ENCODE measurements at regions of chr6 and their contacts with region 1.

Region 1: GRCh38 chr6:52162940-52163908 is 23.0 kb upstream of the IL17A start:
- DNase-seq: peak; percentile 29
- CTCF ChIP-seq: peak; percentile 76

Region 2: DNA sequence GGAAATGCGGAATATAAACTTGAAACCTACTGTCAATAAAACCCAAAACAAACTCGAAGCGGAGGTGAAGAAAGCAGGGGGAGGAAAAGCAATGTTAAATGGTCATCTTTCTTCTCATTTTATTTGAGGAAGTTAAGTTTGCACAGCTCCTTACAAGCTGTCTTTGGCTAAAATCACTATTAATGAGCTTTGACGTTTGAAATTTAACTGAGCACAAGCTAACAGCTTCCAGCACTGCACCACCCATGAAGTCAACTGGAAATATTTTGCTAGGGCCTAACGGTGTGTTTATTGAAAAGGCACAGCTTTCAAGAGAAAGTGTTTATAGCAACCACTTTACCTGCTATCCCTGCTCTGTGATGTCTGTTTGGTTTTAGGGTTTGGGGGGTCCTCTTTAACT is 179.7 kb before region 1 on chr6:
- in situ Hi-C with region 1: no loop called
- DNase-seq: no peak
- CTCF ChIP-seq: no peak

Region 3: DNA sequence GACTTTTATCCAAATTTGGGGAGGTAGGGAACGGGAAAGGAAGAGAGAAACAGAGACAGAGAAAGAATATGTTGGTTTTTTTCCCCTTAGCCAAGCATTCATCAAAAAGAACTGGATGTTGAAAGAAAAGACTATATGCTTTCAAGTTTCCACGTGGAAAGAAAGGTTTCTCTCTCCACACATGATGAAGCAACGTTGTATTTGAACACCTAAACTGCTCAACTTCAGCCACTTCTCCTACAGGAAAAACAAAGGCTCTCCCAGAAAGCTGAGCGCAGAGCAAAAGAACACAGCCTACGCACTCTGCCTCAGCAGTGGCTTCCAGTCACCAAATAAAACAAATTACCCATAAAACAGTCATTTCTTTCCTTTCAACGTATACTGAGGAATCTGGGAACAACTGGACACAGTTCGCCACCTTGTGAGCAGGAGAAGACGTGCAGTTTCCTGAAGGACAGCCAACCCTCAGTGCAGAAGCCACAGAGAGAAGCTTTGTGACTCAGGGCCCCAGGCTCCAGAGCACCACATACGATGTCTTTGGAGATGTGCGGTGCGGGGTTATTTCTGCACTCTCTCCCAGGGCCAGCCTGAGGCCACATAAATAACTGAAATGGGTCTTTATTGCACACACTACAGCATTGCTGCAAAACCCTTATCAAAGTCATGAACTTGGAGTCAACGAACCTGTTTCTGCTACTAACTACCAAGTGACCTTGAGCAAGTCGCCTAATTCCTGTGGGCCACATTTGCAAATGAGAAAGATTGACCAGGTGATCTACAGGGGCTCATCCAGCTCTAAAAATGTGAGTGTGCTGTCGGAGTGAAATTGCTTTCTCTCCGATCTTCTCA is 71.0 kb after region 1 on chr6:
- in situ Hi-C with region 1: loop called (anchors 10 kb)
- DNase-seq: peak; percentile 49
- CTCF ChIP-seq: peak; percentile 55

Region 4: GRCh38 chr6:52263709-52264540 is 100.7 kb after region 1 on chr6:
- in situ Hi-C with region 1: loop called (anchors 10 kb)
- DNase-seq: peak; percentile 62
- CTCF ChIP-seq: peak; percentile 91

Region 5: DNA sequence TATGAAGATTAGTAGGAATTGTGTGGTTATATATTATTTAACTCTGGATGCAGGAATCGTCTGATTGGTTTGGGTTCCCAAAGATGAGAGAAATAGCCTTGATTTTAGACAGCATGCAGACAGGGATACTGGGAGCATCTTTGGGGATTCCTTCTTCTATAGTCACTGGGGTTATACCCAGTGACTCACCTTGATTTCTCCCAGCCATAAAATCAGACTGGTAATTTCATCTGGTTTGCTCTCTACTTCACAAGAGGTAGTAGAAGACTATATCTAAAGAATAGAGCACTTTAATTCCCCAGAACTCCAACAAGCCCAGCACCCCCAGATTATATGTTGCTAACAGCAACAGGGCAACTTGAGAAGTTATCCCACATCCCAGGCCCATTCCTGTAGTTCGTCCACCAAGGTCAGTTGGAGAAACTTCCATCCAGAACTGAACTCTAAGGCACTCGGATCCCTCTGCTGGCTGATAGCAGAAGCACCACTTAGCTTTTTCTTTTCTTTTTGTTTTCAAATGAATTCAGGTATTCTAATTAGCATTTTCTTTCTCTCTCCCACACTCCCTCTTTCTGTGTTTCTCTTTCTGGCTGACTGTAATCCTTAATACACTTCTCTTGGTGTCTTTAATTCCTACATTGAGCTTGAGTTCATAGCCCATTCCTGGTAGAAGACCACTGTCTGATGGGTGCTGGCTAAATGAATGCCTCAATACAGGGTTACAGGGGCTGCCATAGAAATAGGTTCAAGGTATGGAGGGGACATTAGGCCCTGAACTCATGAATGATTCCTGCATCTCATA is 236.5 kb after region 1 on chr6:
- in situ Hi-C with region 1: loop called (anchors 10 kb)
- DNase-seq: peak; percentile 48
- CTCF ChIP-seq: peak; percentile 78

Measured in GM13976 (cell line).